Posterior cingulate gyrus (tissue), 11 donors: ENCODE measurements at regions of chr1 and their contacts with region 1.

Region 1: DNA sequence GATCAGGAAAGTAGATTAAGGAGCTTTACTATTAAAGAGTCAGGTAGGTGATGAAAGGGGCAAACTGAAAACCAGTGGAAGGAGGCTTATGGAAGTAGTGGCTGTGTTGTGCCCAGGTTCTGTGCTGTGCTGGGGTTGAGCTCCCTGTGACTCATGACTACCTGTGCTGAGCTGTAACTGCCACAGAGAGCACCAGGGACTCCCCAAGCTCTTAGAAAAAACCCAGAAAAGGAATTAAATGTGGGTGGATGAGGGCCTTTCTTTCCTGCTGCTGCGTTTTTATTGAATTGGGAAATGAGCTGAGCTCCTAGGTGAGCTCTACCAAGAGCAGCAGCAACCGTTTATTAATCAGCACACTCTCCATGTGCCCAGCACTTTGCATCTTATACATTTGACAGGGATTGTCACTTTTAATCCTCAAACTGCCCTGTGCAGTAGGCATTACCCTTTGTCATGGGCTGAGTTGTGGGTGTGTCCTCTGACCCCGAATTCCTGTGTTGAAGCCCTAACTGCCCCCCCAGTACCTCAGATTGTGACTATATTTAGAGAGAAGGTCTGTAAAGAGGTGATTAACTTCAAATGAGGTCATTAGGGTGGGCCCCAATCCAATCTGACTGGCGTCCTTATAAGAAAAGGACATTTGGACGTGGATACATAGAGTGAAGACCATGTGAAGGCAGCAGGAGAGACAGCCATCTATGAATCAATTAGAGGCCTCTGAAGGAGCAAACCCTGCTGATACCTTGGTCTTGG is 65.4 kb downstream of the AK4 start:
- DNase-seq: no peak

Region 2: GRCh38 chr1:65059930-65060538 is 153.4 kb before region 1 on chr1:
- intact Hi-C with region 1: loop called (anchors 5 kb)
- DNase-seq: no peak

Region 3: GRCh38 chr1:65150583-65151263 is 62.7 kb before region 1 on chr1:
- intact Hi-C with region 1: no loop called
- DNase-seq: no peak